Caco-2 (cell line): ENCODE measurements at regions of chr21 and their contacts with region 1.

Region 1: GRCh38 chr21:33588485-33589335 is at the start of gene DONSON:
- DNase-seq: peak; percentile 94 to 96
- H3K4me3 ChIP-seq: peak within 1 kb of the TSS; percentile 85
- H3K4me3 Mint-ChIP-seq: peak within 1 kb of the TSS; percentile 91
- H3K27ac Mint-ChIP-seq: peak within 1 kb of the TSS; percentile 88
- H3K4me1 ChIP-seq: peaks cover 15% of the 10 kb centered on the region
- H3K4me1 Mint-ChIP-seq: peaks cover 8% of the 10 kb centered on the region
- H3K27me3 ChIP-seq: no peaks in the 10 kb centered on the region
- H3K27me3 Mint-ChIP-seq: no peaks in the 10 kb centered on the region
- CTCF ChIP-seq: no peak
- total RNA-seq, gene DONSON: 36.2 and 36.4 TPM in 2 replicates

Region 2: DNA sequence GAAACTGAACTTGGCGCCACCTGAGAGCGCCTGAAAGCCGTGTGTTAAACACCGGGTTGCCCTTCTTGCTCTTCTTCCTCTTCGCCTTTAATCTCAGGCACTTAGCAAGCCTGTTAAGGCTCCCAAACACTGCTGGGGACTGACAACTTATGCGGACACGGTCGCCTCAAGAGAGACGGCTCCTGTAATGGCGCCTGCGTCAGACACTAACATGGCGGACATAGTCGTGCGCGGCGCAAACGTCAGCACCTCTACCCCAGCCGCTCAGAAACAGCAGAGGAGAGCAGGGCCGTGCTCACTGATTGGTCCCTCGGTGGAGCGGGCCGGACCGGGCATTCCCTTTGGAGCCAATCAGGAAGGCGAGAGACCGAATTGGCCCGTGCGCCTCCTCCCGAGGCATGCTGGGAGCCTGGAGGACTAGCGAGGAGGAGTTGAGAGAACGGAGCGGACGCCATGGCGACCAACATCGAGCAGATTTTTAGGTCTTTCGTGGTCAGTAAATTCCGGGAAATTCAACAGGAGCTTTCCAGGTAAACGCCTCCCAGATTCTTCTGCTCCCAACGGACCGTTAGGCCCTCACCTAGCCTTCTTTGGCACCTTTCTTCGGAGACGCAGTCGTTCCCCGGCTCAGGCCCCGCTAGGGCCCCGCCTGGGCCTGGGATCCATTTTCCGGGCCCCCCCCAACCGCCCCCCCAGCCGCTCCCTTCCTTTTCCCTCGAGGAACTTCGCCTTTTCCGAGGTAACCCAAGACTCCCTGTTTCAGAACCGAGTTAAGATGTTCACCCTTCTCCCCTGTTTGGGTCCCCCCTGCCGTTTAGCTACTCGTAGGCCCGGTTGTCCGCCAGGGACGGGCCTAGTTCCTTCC is 45.8 kb before region 1 on chr21 and contains the start of gene SON:
- CTCF ChIA-PET with region 1: no interaction called
- POLR2A ChIA-PET with region 1: interaction called, 13 read pairs
- intact Hi-C with region 1: no loop called
- DNase-seq: peak; percentile 98 to 99
- H3K4me3 ChIP-seq: peak within 1 kb of the TSS; percentile 74
- H3K4me3 Mint-ChIP-seq: peak within 1 kb of the TSS; percentile 82
- H3K27ac Mint-ChIP-seq: peak within 1 kb of the TSS; percentile 98
- H3K4me1 ChIP-seq: peaks cover 19% of the 10 kb centered on the region
- H3K4me1 Mint-ChIP-seq: peaks cover 9% of the 10 kb centered on the region
- H3K27me3 ChIP-seq: no peaks in the 10 kb centered on the region
- H3K27me3 Mint-ChIP-seq: no peaks in the 10 kb centered on the region
- CTCF ChIP-seq: no peak
- total RNA-seq, gene SON: 220 and 273 TPM in 2 replicates

Region 3: GRCh38 chr21:33619726-33620125 is 31.0 kb after region 1 on chr21:
- CTCF ChIA-PET with region 1: no interaction called
- POLR2A ChIA-PET with region 1: interaction called, 11 read pairs
- intact Hi-C with region 1: no loop called
- DNase-seq: no peak
- H3K4me3 ChIP-seq: no peak overlapping the region
- H3K4me3 Mint-ChIP-seq: no peak overlapping the region
- H3K27ac Mint-ChIP-seq: no peak overlapping the region
- H3K4me1 ChIP-seq: peaks cover 36% of the 10 kb centered on the region
- H3K4me1 Mint-ChIP-seq: peaks cover 17% of the 10 kb centered on the region
- H3K27me3 ChIP-seq: no peaks in the 10 kb centered on the region
- H3K27me3 Mint-ChIP-seq: no peaks in the 10 kb centered on the region
- CTCF ChIP-seq: no peak